ENCODE measurements at regions of chr14 and their contacts with region 1.

Region 1: GRCh38 chr14:81193924-81194633 is 26.7 kb downstream of the GTF2A1 start:
- DNase-seq: no peak
- H3K4me3 ChIP-seq: no peak overlapping the region
- H3K27ac ChIP-seq: no peak overlapping the region
- H3K4me1 ChIP-seq: no peaks in the 10 kb centered on the region
- H3K27me3 ChIP-seq: no peaks in the 10 kb centered on the region

Region 2: GRCh38 chr14:81211844-81212243 is 17.8 kb after region 1 on chr14:
- CTCF ChIA-PET with region 1: interaction called, 12 read pairs
- POLR2A ChIA-PET with region 1: no interaction called
- DNase-seq: peak; percentile 69 to 85 (median 81)
- H3K4me3 ChIP-seq: no peak overlapping the region
- H3K27ac ChIP-seq: no peak overlapping the region
- H3K4me1 ChIP-seq: peaks cover 3 to 8% (median 5%) of the 10 kb centered on the region in 4 experiments
- H3K27me3 ChIP-seq: no peaks in the 10 kb centered on the region

Region 3: DNA sequence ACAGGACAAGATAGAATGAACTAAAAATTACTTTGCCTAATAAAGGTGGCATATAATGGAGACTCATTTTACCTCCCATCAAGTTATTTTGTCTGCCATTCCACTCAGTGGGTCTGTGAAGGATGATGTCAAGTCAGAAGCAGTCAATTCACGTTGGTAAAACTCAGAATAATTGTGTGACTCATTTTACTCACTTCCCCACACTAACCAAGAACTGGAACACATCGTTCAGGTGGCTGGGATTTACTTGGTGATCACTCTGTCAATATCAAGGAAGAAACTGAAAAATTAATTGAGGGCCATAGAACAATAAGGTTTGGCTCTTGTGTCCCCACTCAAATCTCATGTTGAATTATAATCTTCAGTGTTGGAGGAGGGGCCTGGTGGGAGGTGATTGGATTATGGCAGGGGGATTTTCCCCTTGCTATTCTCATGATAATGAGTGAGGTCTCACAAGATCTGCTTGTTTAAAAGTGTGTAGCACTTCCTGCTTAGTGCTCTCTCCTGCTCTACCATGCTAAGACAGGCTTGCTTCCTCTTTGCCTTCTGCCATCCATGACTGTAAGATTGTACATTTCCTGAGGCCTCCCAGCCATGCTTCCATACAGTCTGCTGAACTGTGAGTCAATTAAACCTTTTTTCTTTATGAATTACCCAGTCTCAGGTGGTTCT is 62.3 kb after region 1 on chr14:
- CTCF ChIA-PET with region 1: no interaction called
- POLR2A ChIA-PET with region 1: no interaction called
- DNase-seq: peak in 2 of 3 donors; percentile 49 to 61
- H3K4me3 ChIP-seq: no peak overlapping the region
- H3K27ac ChIP-seq: no peak overlapping the region
- H3K4me1 ChIP-seq: peaks cover 0 to 7% (median 4%) of the 10 kb centered on the region in 4 experiments
- H3K27me3 ChIP-seq: no peaks in the 10 kb centered on the region

Measured in common myeloid progenitor, CD34-positive (primary cell).